ENCODE measurements at regions of chr10 and their contacts with region 1.

Region 1: GRCh38 chr10:8033812-8034465 is 20.5 kb upstream of the GATA3 start:
- DNase-seq: no peak
- ATAC-seq: no peak
- H3K4me3 ChIP-seq: no peak overlapping the region
- H3K27ac ChIP-seq: no peak overlapping the region
- H3K4me1 ChIP-seq: no peaks in the 10 kb centered on the region
- H3K27me3 ChIP-seq: no peaks in the 10 kb centered on the region
- CTCF ChIP-seq: no peak

Region 2: GRCh38 chr10:8067995-8068535 is 34.1 kb after region 1 on chr10:
- CTCF ChIA-PET with region 1: interaction called, 11 read pairs
- POLR2A ChIA-PET with region 1: no interaction called
- in situ Hi-C with region 1: no loop called
- intact Hi-C with region 1: no loop called
- DNase-seq: no peak
- ATAC-seq: no peak
- H3K4me3 ChIP-seq: no peak overlapping the region
- H3K27ac ChIP-seq: no peak overlapping the region
- H3K4me1 ChIP-seq: no peaks in the 10 kb centered on the region
- H3K27me3 ChIP-seq: no peaks in the 10 kb centered on the region
- CTCF ChIP-seq: no peak

Measured in Panc1 (cell line).